Activated CD8-positive, alpha-beta T cell treated with anti-CD3 and anti-CD28 coated beads for 36 hours (primary cell): ENCODE measurements at regions of chr18 and their contacts with region 1.

Region 1: GRCh38 chr18:24488824-24489493 is 28.5 kb downstream of the HRH4 start:
- DNase-seq: no peak
- ATAC-seq: peak; percentile 65
- H3K4me3 Mint-ChIP-seq: no peak overlapping the region
- H3K27ac Mint-ChIP-seq: no peak overlapping the region
- H3K4me1 Mint-ChIP-seq: peaks cover 14% of the 10 kb centered on the region
- H3K27me3 Mint-ChIP-seq: peaks cover 13% of the 10 kb centered on the region
- CTCF ChIP-seq: peak; percentile 81

Region 2: DNA sequence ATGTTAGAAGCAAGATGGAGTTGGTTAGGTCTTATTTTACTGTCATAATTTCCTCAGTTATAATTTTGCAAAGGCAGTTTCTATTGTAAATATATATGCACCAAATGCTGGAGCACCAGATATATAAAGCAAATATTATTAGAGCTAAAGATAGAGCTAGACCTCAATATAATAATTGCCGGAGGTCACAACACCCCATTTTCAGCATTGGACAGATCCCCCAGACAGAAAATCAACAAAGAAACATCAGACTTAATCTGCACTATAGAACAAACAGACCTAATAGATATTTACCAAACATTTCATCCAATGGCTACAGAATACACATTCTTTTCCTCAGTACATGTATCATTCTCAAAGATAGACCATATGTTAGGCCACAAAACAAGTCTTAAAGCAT is 234.9 kb before region 1 on chr18:
- CTCF ChIA-PET with region 1: no interaction called
- POLR2A ChIA-PET with region 1: no interaction called
- intact Hi-C with region 1: no loop called
- DNase-seq: no peak
- ATAC-seq: no peak
- H3K4me3 Mint-ChIP-seq: no peak overlapping the region
- H3K27ac Mint-ChIP-seq: no peak overlapping the region
- H3K4me1 Mint-ChIP-seq: no peaks in the 10 kb centered on the region
- H3K27me3 Mint-ChIP-seq: peaks cover 2% of the 10 kb centered on the region
- CTCF ChIP-seq: no peak

Region 3: GRCh38 chr18:24362758-24363157 is 126.2 kb before region 1 on chr18:
- CTCF ChIA-PET with region 1: interaction called, 192 read pairs
- POLR2A ChIA-PET with region 1: no interaction called
- intact Hi-C with region 1: loop called (anchors 2 kb)
- DNase-seq: no peak
- ATAC-seq: no peak
- H3K4me3 Mint-ChIP-seq: no peak overlapping the region
- H3K27ac Mint-ChIP-seq: no peak overlapping the region
- H3K4me1 Mint-ChIP-seq: no peaks in the 10 kb centered on the region
- H3K27me3 Mint-ChIP-seq: no peaks in the 10 kb centered on the region
- CTCF ChIP-seq: no peak

Region 4: DNA sequence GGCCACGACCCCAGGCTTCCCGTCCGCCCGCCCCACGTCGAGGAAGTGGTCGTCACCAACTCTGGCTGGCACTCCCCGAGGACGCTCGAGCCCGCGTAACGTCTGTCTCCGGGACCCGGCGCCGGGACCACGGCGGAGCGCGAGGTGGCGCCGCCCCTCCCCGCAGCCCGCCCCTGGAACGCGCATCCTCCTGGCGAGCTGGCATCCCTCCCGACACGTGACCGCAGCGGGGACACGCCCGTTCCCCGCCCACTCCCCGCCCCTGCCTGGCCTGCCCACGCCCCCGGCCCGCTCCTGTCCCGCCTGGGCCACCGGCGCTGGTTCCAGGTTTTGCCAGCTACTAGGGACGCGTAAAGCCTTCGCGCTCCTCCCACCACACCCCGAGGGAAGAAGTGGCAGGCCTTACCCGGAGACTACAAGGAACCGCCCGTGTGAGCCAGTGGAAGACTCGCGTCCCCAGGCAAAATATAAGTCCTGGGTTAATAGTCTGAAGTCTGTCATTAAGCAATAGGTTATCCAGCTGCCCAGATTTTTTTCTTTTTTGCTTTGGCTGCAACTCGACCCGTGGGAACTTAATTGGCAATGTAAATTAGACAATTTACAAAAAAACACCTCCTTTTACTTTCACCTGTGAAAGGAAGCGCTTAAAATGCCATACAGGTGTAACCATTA is 91.1 kb before region 1 on chr18 and contains the start of gene OSBPL1A:
- CTCF ChIA-PET with region 1: interaction called, 10 read pairs
- POLR2A ChIA-PET with region 1: no interaction called
- intact Hi-C with region 1: no loop called
- DNase-seq: peak; percentile 76
- ATAC-seq: peak; percentile 84
- H3K4me3 Mint-ChIP-seq: peak within 1 kb of the TSS; percentile 68
- H3K27ac Mint-ChIP-seq: no peak within 1 kb of the TSS
- H3K4me1 Mint-ChIP-seq: peaks cover 15% of the 10 kb centered on the region
- H3K27me3 Mint-ChIP-seq: peaks cover 24% of the 10 kb centered on the region
- CTCF ChIP-seq: no peak
- total RNA-seq, gene OSBPL1A: 2.7 to 3.1 TPM

Region 5: GRCh38 chr18:24446953-24447538 is 41.9 kb before region 1 on chr18:
- CTCF ChIA-PET with region 1: interaction called, 11 read pairs
- POLR2A ChIA-PET with region 1: no interaction called
- intact Hi-C with region 1: no loop called
- DNase-seq: no peak
- ATAC-seq: no peak
- H3K4me3 Mint-ChIP-seq: no peak overlapping the region
- H3K27ac Mint-ChIP-seq: no peak overlapping the region
- H3K4me1 Mint-ChIP-seq: peaks cover 3% of the 10 kb centered on the region
- H3K27me3 Mint-ChIP-seq: no peaks in the 10 kb centered on the region
- CTCF ChIP-seq: no peak

Region 6: GRCh38 chr18:24469976-24470624 is 18.9 kb before region 1 on chr18:
- CTCF ChIA-PET with region 1: interaction called, 12 read pairs
- POLR2A ChIA-PET with region 1: no interaction called
- intact Hi-C with region 1: no loop called
- DNase-seq: no peak
- ATAC-seq: no peak
- H3K4me3 Mint-ChIP-seq: no peak overlapping the region
- H3K27ac Mint-ChIP-seq: no peak overlapping the region
- H3K4me1 Mint-ChIP-seq: no peaks in the 10 kb centered on the region
- H3K27me3 Mint-ChIP-seq: peaks cover 2% of the 10 kb centered on the region
- CTCF ChIP-seq: no peak

Region 7: DNA sequence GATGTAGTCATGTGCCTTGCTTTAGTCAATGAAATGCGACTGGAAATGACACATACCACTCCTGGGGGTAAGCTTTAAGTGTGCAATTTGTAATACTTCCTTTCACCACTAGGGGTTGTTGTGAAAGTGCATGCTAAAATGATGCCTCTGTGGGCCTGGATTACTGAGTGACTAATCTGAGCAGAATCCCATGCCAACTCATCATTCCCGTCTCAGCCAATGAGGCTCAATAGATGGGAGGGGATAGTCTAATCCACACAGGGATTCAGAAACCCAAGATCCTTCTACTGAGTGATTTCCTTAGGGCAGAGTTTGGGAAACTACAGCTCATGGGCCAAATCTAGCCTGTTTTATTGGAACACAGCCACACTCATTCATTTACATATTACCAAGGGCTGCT is 25.5 kb after region 1 on chr18:
- CTCF ChIA-PET with region 1: interaction called, 12 read pairs
- POLR2A ChIA-PET with region 1: no interaction called
- intact Hi-C with region 1: no loop called
- DNase-seq: no peak
- ATAC-seq: peak; percentile 89
- H3K4me3 Mint-ChIP-seq: no peak overlapping the region
- H3K27ac Mint-ChIP-seq: no peak overlapping the region
- H3K4me1 Mint-ChIP-seq: no peaks in the 10 kb centered on the region
- H3K27me3 Mint-ChIP-seq: no peaks in the 10 kb centered on the region
- CTCF ChIP-seq: peak; percentile 82

Region 8: GRCh38 chr18:24631243-24632025 is 142.5 kb after region 1 on chr18:
- CTCF ChIA-PET with region 1: no interaction called
- POLR2A ChIA-PET with region 1: no interaction called
- intact Hi-C with region 1: no loop called
- DNase-seq: peak; percentile 10
- ATAC-seq: no peak
- H3K4me3 Mint-ChIP-seq: no peak overlapping the region
- H3K27ac Mint-ChIP-seq: no peak overlapping the region
- H3K4me1 Mint-ChIP-seq: no peaks in the 10 kb centered on the region
- H3K27me3 Mint-ChIP-seq: peaks cover 1% of the 10 kb centered on the region
- CTCF ChIP-seq: no peak